Caco-2 (cell line): ENCODE measurements at regions of chr15 and their contacts with region 1.

Region 1: GRCh38 chr15:91852741-91853510 is 582 bp upstream of the SLCO3A1 start:
- DNase-seq: peak; percentile 39 to 46
- H3K4me3 ChIP-seq: peak overlapping the region; percentile 27
- H3K4me3 Mint-ChIP-seq: peak overlapping the region; percentile 57
- H3K27ac Mint-ChIP-seq: no peak overlapping the region
- H3K4me1 ChIP-seq: no peaks in the 10 kb centered on the region
- H3K4me1 Mint-ChIP-seq: no peaks in the 10 kb centered on the region
- H3K27me3 ChIP-seq: no peaks in the 10 kb centered on the region; the same call in 1 of the 2 replicates
- H3K27me3 Mint-ChIP-seq: peaks cover 18% of the 10 kb centered on the region
- CTCF ChIP-seq: peak; percentile 52 to 67

Region 2: DNA sequence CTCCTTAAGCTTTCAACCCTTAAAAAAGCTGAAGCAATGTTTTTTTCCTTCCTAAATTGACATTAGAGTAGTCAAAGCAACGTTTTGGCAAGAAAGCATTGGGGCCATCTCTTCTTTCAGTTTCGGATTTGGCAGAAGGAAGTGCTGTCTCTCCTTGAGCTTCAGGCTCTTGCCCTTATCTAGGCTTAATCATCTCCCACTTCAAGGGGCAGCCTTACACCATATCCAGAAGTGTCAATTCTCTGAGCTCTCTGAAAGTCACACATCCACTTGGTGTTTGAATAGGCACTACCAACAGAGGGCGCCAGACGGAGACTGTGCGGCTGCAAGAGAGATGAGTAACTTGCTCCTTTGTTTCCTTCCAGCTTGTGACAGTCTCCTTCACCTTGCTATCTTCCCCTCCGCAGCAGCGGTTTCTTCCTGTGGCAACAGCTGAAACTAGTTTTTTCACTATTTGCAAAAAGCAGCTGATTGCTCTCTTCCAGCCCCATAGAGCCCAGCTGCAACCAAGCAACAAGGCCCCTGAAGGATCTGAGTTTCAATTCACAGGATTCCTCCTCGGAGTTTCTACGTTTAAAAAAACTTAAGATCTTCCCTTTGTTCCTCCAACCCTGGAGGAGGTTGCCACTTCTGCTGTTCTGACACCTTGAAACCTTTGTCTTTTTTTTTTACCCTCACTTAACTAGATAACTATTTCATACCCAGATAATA is 146.4 kb before region 1 on chr15:
- CTCF ChIA-PET with region 1: no interaction called
- POLR2A ChIA-PET with region 1: no interaction called
- intact Hi-C with region 1: loop called (anchors 1 kb)
- DNase-seq: peak; percentile 53 to 63
- H3K4me3 ChIP-seq: no peak overlapping the region
- H3K4me3 Mint-ChIP-seq: no peak overlapping the region
- H3K27ac Mint-ChIP-seq: no peak overlapping the region
- H3K4me1 ChIP-seq: no peaks in the 10 kb centered on the region
- H3K4me1 Mint-ChIP-seq: no peaks in the 10 kb centered on the region
- H3K27me3 ChIP-seq: no peaks in the 10 kb centered on the region
- H3K27me3 Mint-ChIP-seq: no peaks in the 10 kb centered on the region
- CTCF ChIP-seq: peak; percentile 76 to 81

Region 3: GRCh38 chr15:91940492-91941381 is 87.8 kb after region 1 on chr15:
- CTCF ChIA-PET with region 1: no interaction called
- POLR2A ChIA-PET with region 1: no interaction called
- intact Hi-C with region 1: no loop called
- DNase-seq: peak in 1 of 2 experiments; percentile 57
- H3K4me3 ChIP-seq: no peak overlapping the region
- H3K4me3 Mint-ChIP-seq: no peak overlapping the region
- H3K27ac Mint-ChIP-seq: peak overlapping the region; percentile 75
- H3K4me1 ChIP-seq: peaks cover 27% of the 10 kb centered on the region
- H3K4me1 Mint-ChIP-seq: peaks cover 6% of the 10 kb centered on the region
- H3K27me3 ChIP-seq: no peaks in the 10 kb centered on the region
- H3K27me3 Mint-ChIP-seq: no peaks in the 10 kb centered on the region
- CTCF ChIP-seq: no peak